WTC11 (cell line): ENCODE measurements at regions of chr17 and their contacts with region 1.

Region 1: GRCh38 chr17:38667099-38667786 is 7.5 kb downstream of the EPOP start:
- DNase-seq: peak; percentile 82
- ATAC-seq: peak; percentile 12; the same call in 1 of the 2 replicates
- H3K4me3 Mint-ChIP-seq: no peak overlapping the region
- H3K27ac Mint-ChIP-seq: no peak overlapping the region
- H3K4me1 Mint-ChIP-seq: peaks cover 52% of the 10 kb centered on the region
- H3K27me3 Mint-ChIP-seq: peaks cover 60% of the 10 kb centered on the region
- CTCF ChIP-seq: peak; percentile 96

Region 2: DNA sequence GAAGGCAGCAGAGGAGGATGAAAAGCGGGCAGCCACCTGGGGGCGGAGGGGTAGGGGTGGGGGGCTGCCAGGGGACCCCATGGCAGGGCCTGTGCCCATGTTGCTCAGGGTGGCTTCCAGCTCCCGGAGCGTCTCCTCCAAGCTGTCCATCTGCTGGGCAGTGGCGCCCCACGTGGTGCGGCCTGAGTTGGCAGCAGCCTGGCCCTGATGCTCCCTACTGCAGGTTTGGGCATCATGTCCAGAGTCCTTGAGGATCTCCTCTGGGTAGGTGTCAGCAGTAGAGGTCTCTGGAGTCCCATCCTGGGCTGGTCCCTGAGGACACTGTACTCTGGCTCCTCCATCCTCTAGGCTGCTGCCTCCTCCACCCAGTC is 122.4 kb before region 1 on chr17:
- CTCF ChIA-PET with region 1: interaction called, 16 read pairs
- POLR2A ChIA-PET with region 1: interaction called, 3 read pairs
- DNase-seq: peak; percentile 43
- ATAC-seq: peak; percentile 20; the same call in 1 of the 2 replicates
- H3K4me3 Mint-ChIP-seq: no peak overlapping the region
- H3K27ac Mint-ChIP-seq: no peak overlapping the region
- H3K4me1 Mint-ChIP-seq: peaks cover 18% of the 10 kb centered on the region
- H3K27me3 Mint-ChIP-seq: peaks cover 2% of the 10 kb centered on the region; the same call in 1 of the 2 replicates
- CTCF ChIP-seq: no peak

Region 3: GRCh38 chr17:38584350-38584925 is 82.8 kb before region 1 on chr17:
- CTCF ChIA-PET with region 1: interaction called, 727 read pairs
- POLR2A ChIA-PET with region 1: no interaction called
- DNase-seq: peak; percentile 78
- ATAC-seq: peak; percentile 60
- H3K4me3 Mint-ChIP-seq: 0 out of 2 replicates have a peak overlapping the region, but pooled peaks have one; percentile 14
- H3K27ac Mint-ChIP-seq: peak overlapping the region; percentile 36; the same call in 1 of the 2 replicates
- H3K4me1 Mint-ChIP-seq: peaks cover 59% of the 10 kb centered on the region
- H3K27me3 Mint-ChIP-seq: peaks cover 38% of the 10 kb centered on the region
- CTCF ChIP-seq: peak; percentile 97

Region 4: GRCh38 chr17:38632334-38632733 is 34.9 kb before region 1 on chr17:
- CTCF ChIA-PET with region 1: no interaction called
- POLR2A ChIA-PET with region 1: no interaction called
- DNase-seq: no peak
- ATAC-seq: no peak
- H3K4me3 Mint-ChIP-seq: no peak overlapping the region
- H3K27ac Mint-ChIP-seq: no peak overlapping the region
- H3K4me1 Mint-ChIP-seq: peaks cover 16% of the 10 kb centered on the region
- H3K27me3 Mint-ChIP-seq: peaks cover 4% of the 10 kb centered on the region; the same call in 1 of the 2 replicates
- CTCF ChIP-seq: no peak

Region 5: DNA sequence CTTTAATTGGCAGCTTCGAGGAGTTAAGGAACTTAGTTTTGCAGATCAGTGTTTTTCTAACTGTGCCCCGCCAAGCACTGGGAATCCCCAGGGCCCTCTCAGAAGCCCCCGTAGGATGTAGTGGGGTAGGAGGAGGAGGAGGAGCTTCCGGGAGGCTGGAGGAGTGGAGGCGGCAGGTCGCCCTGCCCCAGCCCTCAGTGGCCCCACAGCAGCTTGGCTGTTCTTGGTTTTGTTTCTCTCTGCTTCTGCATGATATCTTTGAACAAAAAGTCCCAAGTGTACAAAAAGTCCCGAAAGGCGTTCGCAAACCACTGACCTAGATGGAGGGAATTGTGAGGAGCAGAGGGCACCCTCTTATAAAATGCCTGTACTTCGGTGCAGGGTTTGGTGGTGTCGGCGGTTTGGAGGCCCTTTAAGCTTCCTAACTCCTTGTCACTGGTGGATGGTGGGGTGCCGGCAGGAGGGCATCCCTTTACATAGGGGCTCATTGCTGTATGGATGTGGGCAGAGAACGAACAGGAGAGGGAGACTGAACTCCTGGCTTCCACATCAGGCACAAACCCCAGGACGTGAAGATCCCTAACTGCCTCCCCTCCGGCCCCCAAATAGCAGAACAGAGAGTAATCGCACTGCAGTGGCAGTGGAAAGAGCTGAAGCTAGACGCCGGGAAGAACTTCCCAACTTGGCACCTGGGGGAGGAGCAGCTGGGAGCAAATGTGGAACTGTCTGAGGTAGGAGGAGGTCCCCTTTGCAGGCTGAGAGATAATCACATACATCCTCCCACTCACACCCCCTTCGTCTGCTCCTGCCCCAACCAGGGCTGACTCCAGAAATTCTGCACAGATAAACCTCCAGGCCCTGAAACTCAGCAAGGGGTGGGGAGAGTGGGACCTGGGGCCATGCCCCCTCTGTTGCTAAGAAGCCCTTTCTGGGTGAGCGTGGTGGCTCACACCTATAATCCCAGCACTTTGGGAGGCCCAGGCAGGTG is 12.5 kb before region 1 on chr17:
- CTCF ChIA-PET with region 1: interaction called, 13 read pairs
- POLR2A ChIA-PET with region 1: no interaction called
- DNase-seq: peak; percentile 10
- ATAC-seq: peak; percentile 65
- H3K4me3 Mint-ChIP-seq: no peak overlapping the region
- H3K27ac Mint-ChIP-seq: no peak overlapping the region
- H3K4me1 Mint-ChIP-seq: peaks cover 30% of the 10 kb centered on the region
- H3K27me3 Mint-ChIP-seq: peaks cover 25% of the 10 kb centered on the region
- CTCF ChIP-seq: no peak

Region 6: DNA sequence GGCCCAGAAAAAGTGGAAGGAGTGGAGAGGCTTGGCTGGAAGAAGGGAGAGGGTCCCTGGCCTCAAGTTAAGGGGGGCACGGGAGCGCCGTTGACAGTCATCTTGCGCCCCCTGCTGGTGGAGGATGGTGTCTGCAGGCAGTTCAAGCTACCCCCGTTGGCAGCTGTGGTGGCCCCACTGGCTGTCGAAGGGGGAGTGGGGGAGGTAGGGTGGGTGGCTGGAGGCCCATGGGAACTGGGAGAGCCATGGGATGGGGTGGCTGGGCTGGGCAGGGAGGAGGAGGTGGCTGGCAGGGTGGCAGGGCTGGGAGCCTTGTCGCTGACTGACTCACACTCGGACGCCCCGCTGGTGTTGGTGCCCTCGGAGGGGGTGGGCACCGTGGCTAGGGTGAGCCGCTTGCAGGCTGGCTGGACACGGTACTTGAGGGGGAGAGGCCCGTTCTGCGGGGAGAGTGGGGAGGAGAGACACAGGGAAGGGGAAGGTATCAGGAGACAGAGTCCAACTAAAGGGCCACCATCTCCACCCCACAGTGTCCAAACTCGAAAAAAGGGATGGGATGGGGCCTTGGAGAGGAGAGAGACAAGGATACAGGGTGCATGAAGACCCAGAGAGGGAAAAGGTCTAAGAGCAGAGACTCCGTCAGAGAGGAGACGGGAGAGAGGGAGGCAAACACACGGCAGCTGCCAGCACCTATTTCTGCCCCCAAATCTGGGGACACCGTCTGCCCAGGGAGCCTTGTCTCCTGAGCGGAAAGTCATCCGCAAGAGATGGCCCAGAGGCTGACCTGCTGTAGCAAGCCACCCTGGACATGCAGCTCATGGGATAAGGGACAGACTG is 68.1 kb after region 1 on chr17:
- CTCF ChIA-PET with region 1: interaction called, 33 read pairs
- POLR2A ChIA-PET with region 1: interaction called, 3 read pairs
- DNase-seq: peak; percentile 85
- ATAC-seq: peak; percentile 34
- H3K4me3 Mint-ChIP-seq: no peak overlapping the region
- H3K27ac Mint-ChIP-seq: peak overlapping the region; percentile 82; the same call in 1 of the 2 replicates
- H3K4me1 Mint-ChIP-seq: peaks cover 26% of the 10 kb centered on the region
- H3K27me3 Mint-ChIP-seq: no peaks in the 10 kb centered on the region; the same call in 1 of the 2 replicates
- CTCF ChIP-seq: peak; percentile 94